ENCODE measurements at regions of chr9 and their contacts with region 1.

Region 1: GRCh38 chr9:68643901-68644809 is 60.9 kb upstream of the PIP5K1B start:
- DNase-seq: peak; percentile 31
- ATAC-seq: peak; percentile 63
- H3K4me3 Mint-ChIP-seq: peak overlapping the region; percentile 73
- H3K27ac Mint-ChIP-seq: peak overlapping the region; percentile 94
- H3K4me1 Mint-ChIP-seq: peaks cover 93% of the 10 kb centered on the region
- H3K27me3 Mint-ChIP-seq: no peaks in the 10 kb centered on the region
- CTCF ChIP-seq: no peak

Region 2: DNA sequence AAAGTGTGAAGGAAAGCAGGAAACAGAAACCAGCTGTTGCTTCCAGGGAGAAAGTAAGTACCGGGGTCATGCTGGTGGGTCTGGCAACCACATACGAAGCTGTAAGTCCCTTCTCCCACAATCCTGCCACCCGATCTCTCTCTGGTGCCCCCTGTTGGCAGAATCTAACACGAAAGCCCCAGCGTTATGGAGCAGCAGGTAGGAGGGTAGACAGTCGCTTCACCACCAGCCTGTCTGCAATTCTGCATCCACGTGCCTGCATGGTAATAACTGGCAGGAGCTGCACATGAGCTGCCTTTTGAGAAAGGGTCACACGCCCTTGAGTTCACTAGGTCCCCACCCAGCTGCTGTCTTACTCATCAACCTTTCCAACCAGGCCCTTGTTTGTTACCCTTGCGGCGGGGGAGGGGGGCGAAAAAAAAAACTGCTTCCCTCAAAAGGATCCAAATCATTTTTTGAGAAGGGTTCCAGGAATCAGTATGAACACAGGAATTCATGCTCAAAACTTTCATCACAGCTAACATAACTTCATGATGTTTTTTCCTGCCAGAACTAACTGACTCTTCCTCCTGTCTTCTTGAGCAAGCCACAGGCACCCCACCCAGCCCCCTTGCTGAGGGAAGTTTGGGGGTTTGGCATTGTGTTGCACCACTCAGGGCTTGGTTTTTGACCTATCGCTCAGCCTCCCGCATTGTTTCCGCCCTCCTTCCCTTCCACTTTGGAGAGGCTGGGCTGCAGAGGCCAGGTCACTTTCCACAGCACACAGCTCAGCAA is 83.9 kb before region 1 on chr9:
- CTCF ChIA-PET with region 1: no interaction called
- POLR2A ChIA-PET with region 1: no interaction called
- intact Hi-C with region 1: no loop called
- DNase-seq: peak; percentile 36
- ATAC-seq: peak; percentile 85
- H3K4me3 Mint-ChIP-seq: peak overlapping the region; percentile 53
- H3K27ac Mint-ChIP-seq: no peak overlapping the region
- H3K4me1 Mint-ChIP-seq: peaks cover 18% of the 10 kb centered on the region
- H3K27me3 Mint-ChIP-seq: peaks cover 7% of the 10 kb centered on the region
- CTCF ChIP-seq: no peak

Region 3: GRCh38 chr9:68595868-68596267 is 48.3 kb before region 1 on chr9:
- CTCF ChIA-PET with region 1: interaction called, 3 read pairs
- POLR2A ChIA-PET with region 1: interaction called, 7 read pairs
- intact Hi-C with region 1: loop called (anchors 5 kb)
- DNase-seq: no peak
- ATAC-seq: no peak
- H3K4me3 Mint-ChIP-seq: no peak overlapping the region
- H3K27ac Mint-ChIP-seq: no peak overlapping the region
- H3K4me1 Mint-ChIP-seq: peaks cover 60% of the 10 kb centered on the region
- H3K27me3 Mint-ChIP-seq: no peaks in the 10 kb centered on the region
- CTCF ChIP-seq: no peak

Region 4: GRCh38 chr9:68631811-68632210 is 12.3 kb before region 1 on chr9:
- CTCF ChIA-PET with region 1: interaction called, 5 read pairs
- POLR2A ChIA-PET with region 1: no interaction called
- intact Hi-C with region 1: loop called (anchors 1 kb)
- DNase-seq: no peak
- ATAC-seq: no peak
- H3K4me3 Mint-ChIP-seq: no peak overlapping the region
- H3K27ac Mint-ChIP-seq: no peak overlapping the region
- H3K4me1 Mint-ChIP-seq: peaks cover 28% of the 10 kb centered on the region
- H3K27me3 Mint-ChIP-seq: no peaks in the 10 kb centered on the region
- CTCF ChIP-seq: no peak

Region 5: DNA sequence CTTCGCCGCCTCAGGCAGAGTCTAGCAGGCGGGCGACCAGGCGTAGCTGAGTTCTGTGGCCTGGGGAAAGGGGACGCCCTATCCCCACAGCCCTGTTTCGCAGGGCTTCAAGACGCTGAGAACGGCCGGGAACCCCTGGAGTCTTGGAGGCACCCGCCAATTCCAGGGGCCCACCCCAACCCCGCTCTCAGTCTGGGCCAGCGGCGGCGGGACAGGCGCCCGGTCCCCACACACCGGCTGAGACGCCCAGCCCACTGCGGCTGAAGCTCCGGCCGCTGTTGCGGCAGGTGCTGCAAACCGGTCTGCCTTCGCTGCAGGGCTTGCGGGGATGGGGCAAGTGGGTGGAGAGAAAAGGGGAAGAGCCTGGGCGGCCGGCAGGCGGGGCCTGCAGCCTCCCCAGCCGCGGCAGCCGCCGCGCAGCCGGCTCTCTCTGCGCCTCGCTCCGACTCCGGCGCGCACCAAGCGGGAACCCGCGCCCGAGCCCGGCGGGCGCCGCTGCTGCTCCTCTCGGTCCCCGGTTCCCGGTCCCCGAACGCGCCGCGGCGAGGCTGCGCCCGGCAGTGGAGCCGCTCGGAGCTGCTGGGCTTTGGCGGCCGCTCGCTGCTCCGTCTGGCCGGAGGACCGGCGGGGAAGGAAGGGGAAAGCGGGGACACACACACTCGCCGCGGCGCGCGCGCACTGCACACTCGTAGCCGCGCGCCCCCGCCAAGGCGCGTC is 60.8 kb after region 1 on chr9 and contains the start of gene PIP5K1B:
- CTCF ChIA-PET with region 1: interaction called, 4 read pairs
- POLR2A ChIA-PET with region 1: interaction called, 11 read pairs
- intact Hi-C with region 1: loop called (anchors 1 kb)
- DNase-seq: peak; percentile 76
- ATAC-seq: peak; percentile 85
- H3K4me3 Mint-ChIP-seq: peak within 1 kb of the TSS; percentile 97
- H3K27ac Mint-ChIP-seq: peak within 1 kb of the TSS; percentile 82
- H3K4me1 Mint-ChIP-seq: peaks cover 50% of the 10 kb centered on the region
- H3K27me3 Mint-ChIP-seq: no peaks in the 10 kb centered on the region
- CTCF ChIP-seq: no peak
- total RNA-seq, gene PIP5K1B: 17.1 and 22.0 TPM in 2 replicates

Region 6: DNA sequence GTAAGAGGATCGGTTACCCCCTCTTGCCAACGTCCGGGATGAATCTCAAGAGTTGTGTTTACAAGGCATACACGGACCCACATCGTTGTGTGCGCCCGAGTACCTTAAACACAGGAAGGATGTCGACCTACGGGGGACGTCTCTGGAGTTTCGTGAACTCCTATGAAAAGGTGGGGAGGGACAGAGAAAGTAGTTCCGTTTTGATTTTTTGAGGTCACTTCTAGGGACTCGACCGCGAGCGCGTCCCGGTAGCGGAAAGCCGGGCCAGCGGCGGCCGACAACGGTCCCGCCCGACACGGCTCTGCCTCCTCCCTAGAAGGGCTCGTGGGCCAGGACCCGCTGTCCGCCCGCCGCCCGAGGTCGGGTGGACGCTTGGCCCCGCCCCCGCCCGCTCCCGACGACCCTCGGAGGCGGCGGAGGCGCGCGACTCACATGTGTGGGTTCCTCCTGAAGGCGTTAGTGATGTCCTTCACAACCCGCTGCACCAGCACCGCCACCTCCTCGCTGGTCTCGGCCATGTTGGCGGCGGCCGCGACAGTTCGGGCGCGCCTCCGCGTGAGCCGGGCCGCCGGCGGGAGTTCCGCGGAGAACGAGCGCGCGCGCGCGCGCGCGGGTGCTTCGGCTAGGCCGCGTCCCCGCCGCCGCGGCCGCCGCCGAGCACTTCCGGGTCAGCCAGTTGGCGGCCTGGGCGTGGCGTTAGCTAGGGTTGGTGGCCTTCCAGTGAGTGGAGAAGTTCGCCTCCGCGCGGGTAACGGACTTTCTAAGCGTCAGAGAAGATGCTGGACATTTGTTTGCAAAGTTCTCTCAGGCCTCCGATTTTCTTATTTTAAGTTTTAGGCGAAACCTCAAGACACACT is 1115.5 kb after region 1 on chr9 and contains the start of gene PTAR1:
- CTCF ChIA-PET with region 1: no interaction called
- POLR2A ChIA-PET with region 1: no interaction called
- intact Hi-C with region 1: loop called (anchors 10 kb)
- DNase-seq: peak; percentile 92
- ATAC-seq: peak; percentile 86
- H3K4me3 Mint-ChIP-seq: peak within 1 kb of the TSS; percentile 95
- H3K27ac Mint-ChIP-seq: peak within 1 kb of the TSS; percentile 94
- H3K4me1 Mint-ChIP-seq: peaks cover 25% of the 10 kb centered on the region
- H3K27me3 Mint-ChIP-seq: no peaks in the 10 kb centered on the region
- CTCF ChIP-seq: no peak
- total RNA-seq, gene PTAR1: 39.3 and 49.5 TPM in 2 replicates

Region 7: DNA sequence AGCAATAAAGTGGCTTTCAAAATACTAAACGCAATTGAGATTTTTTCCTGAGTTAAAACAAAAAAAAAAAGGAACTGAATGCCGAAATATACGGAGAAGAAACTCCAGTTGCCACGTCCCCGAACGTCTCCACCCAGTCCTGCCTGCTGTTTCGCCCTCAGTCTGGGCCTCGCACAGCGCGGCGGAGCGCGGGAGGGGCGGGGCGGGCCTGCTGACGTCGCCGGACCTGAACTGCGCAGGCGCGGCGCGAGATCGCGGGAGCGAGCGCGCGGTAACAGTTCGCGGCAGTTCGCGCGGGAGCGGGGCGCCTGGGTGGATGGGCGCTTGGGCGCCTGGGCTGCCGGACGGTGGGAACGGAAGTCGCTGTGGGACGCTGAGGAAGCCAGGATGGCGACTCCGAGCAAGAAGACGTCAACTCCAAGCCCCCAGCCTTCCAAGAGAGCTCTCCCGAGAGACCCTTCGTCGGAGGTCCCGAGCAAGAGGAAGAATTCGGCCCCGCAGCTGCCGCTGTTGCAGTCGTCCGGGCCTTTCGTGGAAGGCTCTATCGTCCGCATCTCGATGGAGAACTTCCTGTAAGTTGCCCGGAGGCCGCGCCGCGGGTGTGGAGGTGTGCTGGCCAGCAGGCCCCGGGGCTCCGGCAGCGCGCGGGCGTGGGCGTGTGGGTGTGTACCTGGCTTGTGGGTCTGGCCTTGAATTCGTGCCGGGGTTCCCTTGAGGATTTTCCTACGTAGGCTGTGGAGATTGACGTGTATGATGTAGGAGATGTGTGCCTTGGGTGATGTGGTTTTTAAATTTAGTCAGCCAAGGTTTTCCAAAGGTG is 1614.7 kb after region 1 on chr9 and contains the start of gene SMC5:
- CTCF ChIA-PET with region 1: no interaction called
- POLR2A ChIA-PET with region 1: no interaction called
- intact Hi-C with region 1: no loop called
- DNase-seq: peak; percentile 90
- ATAC-seq: peak; percentile 82
- H3K4me3 Mint-ChIP-seq: peak within 1 kb of the TSS; percentile 93
- H3K27ac Mint-ChIP-seq: peak within 1 kb of the TSS; percentile 99
- H3K4me1 Mint-ChIP-seq: peaks cover 52% of the 10 kb centered on the region
- H3K27me3 Mint-ChIP-seq: no peaks in the 10 kb centered on the region
- CTCF ChIP-seq: no peak
- total RNA-seq, gene SMC5: 46.9 and 49.3 TPM in 2 replicates

Measured in activated B cell treated with CpG ODN at 0.5 μM for 24 hours (primary cell).